GM12878 (cell line): ENCODE measurements at regions of chr7 and their contacts with region 1.

Region 1: DNA sequence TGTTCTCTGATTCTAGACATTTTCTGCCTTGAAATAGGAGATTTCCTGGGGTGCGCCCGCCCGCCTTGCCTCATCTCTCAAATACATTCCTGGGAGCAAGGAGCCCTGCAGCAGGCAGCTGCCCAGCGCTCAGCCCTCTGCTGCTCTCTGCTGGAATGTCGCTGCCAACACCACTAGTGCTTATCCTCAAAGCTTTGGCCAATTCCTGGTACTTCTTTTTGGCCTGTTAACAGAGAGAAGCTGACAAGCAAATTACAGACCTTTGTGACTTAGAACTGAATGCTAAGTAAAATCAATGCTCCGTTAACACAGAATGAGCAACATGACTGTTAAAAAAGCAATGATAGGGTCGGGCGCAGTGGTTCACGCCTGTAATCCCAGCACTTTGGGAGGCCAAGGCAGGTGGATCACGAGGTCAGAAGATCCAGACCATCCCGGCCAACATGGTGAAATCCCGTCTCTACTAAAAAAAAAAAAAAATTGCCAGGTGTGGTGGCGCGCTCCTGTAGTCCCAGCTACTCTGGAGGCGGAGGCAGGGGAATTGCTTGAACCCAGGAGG is 41.9 kb upstream of the SYPL1 start:
- DNase-seq: peak; percentile 45
- ATAC-seq: peak; percentile 94
- H3K4me3 ChIP-seq: no peak overlapping the region
- H3K27ac ChIP-seq: no peak overlapping the region
- H3K4me1 ChIP-seq: peaks cover 26% of the 10 kb centered on the region
- H3K27me3 ChIP-seq: no peaks in the 10 kb centered on the region
- CTCF ChIP-seq: peak; percentile 94 to 97 (median 96)
- EP300 ChIP-seq: no peak
- POLR2A ChIP-seq: no peak
- RAD21 ChIP-seq: peak; percentile 99

Region 2: DNA sequence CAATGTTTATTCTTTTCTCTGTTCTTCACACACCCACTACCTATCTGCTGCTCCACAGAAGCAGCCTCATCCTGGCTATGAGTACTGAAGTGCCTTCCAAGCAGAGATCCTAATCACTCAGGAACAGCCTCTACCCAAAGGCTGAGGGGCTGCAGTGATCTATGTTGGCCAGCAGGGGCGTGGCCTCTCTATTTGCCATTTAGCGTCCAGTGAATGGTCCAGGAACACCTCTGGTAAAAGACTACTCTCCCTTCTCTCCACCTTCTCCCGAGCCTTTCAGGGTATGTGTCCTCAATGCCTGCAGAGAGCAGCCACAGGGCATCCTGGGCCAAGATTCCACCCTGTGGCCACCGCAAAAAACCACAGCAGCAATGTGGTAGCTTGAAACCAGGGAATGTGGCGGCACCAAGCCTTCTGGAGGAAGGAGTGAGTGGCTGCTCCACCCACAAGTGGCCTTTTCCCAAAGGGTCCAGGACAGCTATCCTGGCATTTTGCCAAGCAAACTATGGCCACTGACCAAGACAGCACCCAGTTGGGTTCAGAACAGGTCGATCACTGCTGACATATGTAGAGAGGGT is 112.7 kb before region 1 on chr7:
- CTCF ChIA-PET with region 1: interaction called, 35 read pairs
- POLR2A ChIA-PET with region 1: no interaction called
- RAD21 ChIA-PET with region 1: interaction called, 23 read pairs
- SMC1A ChIA-PET with region 1: interaction called, 12 read pairs
- in situ Hi-C with region 1: no loop called
- intact Hi-C with region 1: no loop called
- DNase-seq: no peak
- ATAC-seq: peak; percentile 82
- H3K4me3 ChIP-seq: no peak overlapping the region
- H3K27ac ChIP-seq: no peak overlapping the region
- H3K4me1 ChIP-seq: no peaks in the 10 kb centered on the region
- H3K27me3 ChIP-seq: peaks cover 0 to 6% of the 10 kb centered on the region in 2 experiments; a peak in 2 of 4 replicates
- CTCF ChIP-seq: peak; percentile 56 to 85 (median 82)
- EP300 ChIP-seq: no peak
- POLR2A ChIP-seq: no peak
- RAD21 ChIP-seq: peak; percentile 20; the same call in 1 of the 2 replicates

Region 3: GRCh38 chr7:106056513-106057203 is 97.3 kb before region 1 on chr7:
- CTCF ChIA-PET with region 1: interaction called, 288 read pairs
- POLR2A ChIA-PET with region 1: interaction called, 7 read pairs
- RAD21 ChIA-PET with region 1: interaction called, 133 read pairs
- SMC1A ChIA-PET with region 1: interaction called, 223 read pairs
- in situ Hi-C with region 1: loop called (anchors 5 kb)
- intact Hi-C with region 1: loop called (anchors 1 kb)
- DNase-seq: no peak
- ATAC-seq: peak; percentile 75
- H3K4me3 ChIP-seq: no peak overlapping the region
- H3K27ac ChIP-seq: peak overlapping the region; percentile 97
- H3K4me1 ChIP-seq: peaks cover 52% of the 10 kb centered on the region
- H3K27me3 ChIP-seq: no peaks in the 10 kb centered on the region
- CTCF ChIP-seq: peak; percentile 90 to 93 (median 92)
- EP300 ChIP-seq: no peak
- POLR2A ChIP-seq: no peak
- RAD21 ChIP-seq: peak; percentile 95

Region 4: DNA sequence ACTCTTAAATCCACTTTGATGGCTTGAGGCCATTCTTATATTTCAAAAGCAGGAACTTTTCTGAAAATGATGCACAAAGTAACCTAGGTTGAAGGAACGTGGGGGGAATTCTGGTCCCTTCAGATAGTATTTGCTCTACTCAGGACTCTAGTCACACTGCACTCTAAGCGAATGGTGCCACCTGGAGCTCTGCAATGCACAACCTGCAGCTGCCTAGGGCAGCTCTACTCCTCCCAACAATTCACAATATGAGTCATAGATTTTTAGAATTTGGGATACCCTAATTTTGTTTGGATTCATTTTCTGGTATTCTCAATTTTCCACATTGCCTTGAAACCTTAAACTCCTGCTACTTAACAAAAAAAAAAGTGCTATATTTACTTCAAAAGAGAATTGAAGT is 59.2 kb before region 1 on chr7:
- CTCF ChIA-PET with region 1: interaction called, 24 read pairs
- POLR2A ChIA-PET with region 1: no interaction called
- RAD21 ChIA-PET with region 1: interaction called, 5 read pairs
- SMC1A ChIA-PET with region 1: interaction called, 9 read pairs
- in situ Hi-C with region 1: no loop called
- intact Hi-C with region 1: no loop called
- DNase-seq: no peak
- ATAC-seq: peak; percentile 50
- H3K4me3 ChIP-seq: no peak overlapping the region
- H3K27ac ChIP-seq: no peak overlapping the region
- H3K4me1 ChIP-seq: peaks cover 20% of the 10 kb centered on the region
- H3K27me3 ChIP-seq: no peaks in the 10 kb centered on the region
- CTCF ChIP-seq: peak in 1 of 3 experiments; percentile 14; a peak in 1 of 6 replicates
- EP300 ChIP-seq: no peak
- POLR2A ChIP-seq: no peak
- RAD21 ChIP-seq: peak; percentile 28; the same call in 1 of the 2 replicates

Region 5: DNA sequence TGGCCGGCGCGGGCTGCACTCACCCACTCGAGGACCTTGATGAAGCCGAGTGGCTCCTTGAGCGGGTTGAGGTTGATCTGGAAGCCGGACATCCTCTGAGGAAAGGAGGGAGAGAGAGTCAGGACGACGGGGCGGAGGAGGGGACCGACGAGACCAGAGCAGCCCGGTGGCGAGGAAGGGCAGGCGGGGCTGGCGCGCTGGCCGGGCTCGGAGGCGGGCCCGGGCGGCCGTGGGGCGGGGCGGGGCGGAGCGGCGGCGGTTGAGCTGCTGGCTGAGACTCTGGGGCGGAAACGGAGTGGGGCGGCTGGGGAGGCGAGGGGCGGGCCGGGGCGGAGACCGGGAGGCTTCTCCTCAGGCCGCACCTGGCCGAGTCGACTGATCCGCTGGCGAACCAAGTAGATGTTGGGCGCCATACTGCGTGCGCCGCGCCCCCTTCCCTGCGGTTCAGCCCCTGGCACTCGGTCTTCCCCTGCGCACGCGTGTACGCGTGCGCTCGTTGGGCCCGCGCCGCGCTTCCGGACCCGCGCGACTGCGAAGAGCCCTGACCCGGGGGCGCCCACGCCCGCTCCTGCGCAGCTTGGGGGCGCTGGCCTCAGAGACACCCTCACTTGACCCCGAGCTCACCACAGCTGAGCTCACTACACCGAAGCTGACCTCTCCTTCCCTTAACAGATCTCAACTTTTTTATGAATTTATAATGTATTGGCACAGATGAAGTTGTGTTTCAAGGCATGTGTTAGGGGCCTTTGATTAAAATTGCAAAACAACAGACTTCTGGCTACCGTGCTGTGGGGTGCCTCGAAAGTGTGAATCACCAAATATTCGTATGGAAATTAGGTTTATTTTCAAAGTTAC is 41.6 kb before region 1 on chr7 and contains the start of gene SYPL1:
- CTCF ChIA-PET with region 1: interaction called, 16 read pairs
- POLR2A ChIA-PET with region 1: interaction called, 7 read pairs
- RAD21 ChIA-PET with region 1: interaction called, 60 read pairs
- SMC1A ChIA-PET with region 1: interaction called, 17 read pairs
- in situ Hi-C with region 1: no loop called
- intact Hi-C with region 1: loop called (anchors 2 kb)
- DNase-seq: peak; percentile 66
- ATAC-seq: peak; percentile 88
- H3K4me3 ChIP-seq: peak within 1 kb of the TSS; percentile 83
- H3K27ac ChIP-seq: peak within 1 kb of the TSS; percentile 94
- H3K4me1 ChIP-seq: peaks cover 19% of the 10 kb centered on the region
- H3K27me3 ChIP-seq: no peaks in the 10 kb centered on the region
- CTCF ChIP-seq: peak in 2 of 3 experiments; percentile 5 to 7; a peak in 1 of 6 replicates
- EP300 ChIP-seq: 0 out of 4 replicates have a peak, but pooled peaks of 1 of the 2 experiments have one; percentile 29
- POLR2A ChIP-seq: peak; percentile 91
- RAD21 ChIP-seq: no peak
- polyA plus RNA-seq, gene SYPL1: 109 to 177 TPM

Region 6: DNA sequence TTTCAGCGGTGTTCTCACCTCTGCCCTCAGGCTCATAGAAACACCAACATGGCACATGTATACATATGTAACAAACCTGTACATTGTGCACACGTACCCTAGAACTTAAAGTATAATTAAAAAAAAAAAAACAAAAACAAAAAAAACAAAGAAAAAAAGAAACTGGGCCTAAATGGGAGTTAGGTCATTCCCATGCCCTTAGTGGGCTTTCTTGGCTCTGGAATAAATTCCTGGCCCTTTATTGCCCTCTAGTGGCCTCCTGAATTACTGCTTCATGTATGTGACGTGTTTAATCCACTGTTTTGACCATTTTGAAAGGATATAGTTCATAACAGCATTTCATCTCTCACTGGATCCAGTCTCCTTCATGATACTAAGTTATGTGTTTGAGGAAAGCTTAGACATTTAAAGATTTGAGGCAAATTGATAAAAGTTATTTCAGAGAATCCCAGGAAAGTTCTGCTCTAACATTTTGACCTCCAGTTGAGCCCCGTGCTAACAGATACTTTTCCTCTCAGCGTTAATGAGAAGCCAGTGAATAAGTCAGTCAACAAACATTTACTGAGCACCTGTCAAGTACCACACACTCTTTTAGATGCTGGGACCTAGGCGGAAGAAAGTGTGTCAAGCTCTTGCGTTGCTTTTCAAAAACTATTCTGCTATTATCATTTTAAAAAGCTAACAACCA is 12.8 kb after region 1 on chr7:
- CTCF ChIA-PET with region 1: interaction called, 121 read pairs
- POLR2A ChIA-PET with region 1: no interaction called
- RAD21 ChIA-PET with region 1: interaction called, 71 read pairs
- SMC1A ChIA-PET with region 1: interaction called, 142 read pairs
- in situ Hi-C with region 1: no loop called
- intact Hi-C with region 1: no loop called
- DNase-seq: no peak
- ATAC-seq: peak; percentile 77
- H3K4me3 ChIP-seq: no peak overlapping the region
- H3K27ac ChIP-seq: no peak overlapping the region
- H3K4me1 ChIP-seq: no peaks in the 10 kb centered on the region
- H3K27me3 ChIP-seq: no peaks in the 10 kb centered on the region
- CTCF ChIP-seq: peak; percentile 68 to 77 (median 72); a peak in 5 of 6 replicates
- EP300 ChIP-seq: no peak
- POLR2A ChIP-seq: no peak
- RAD21 ChIP-seq: peak; percentile 85